ENCODE measurements at regions of chr19 and their contacts with region 1.

Region 1: DNA sequence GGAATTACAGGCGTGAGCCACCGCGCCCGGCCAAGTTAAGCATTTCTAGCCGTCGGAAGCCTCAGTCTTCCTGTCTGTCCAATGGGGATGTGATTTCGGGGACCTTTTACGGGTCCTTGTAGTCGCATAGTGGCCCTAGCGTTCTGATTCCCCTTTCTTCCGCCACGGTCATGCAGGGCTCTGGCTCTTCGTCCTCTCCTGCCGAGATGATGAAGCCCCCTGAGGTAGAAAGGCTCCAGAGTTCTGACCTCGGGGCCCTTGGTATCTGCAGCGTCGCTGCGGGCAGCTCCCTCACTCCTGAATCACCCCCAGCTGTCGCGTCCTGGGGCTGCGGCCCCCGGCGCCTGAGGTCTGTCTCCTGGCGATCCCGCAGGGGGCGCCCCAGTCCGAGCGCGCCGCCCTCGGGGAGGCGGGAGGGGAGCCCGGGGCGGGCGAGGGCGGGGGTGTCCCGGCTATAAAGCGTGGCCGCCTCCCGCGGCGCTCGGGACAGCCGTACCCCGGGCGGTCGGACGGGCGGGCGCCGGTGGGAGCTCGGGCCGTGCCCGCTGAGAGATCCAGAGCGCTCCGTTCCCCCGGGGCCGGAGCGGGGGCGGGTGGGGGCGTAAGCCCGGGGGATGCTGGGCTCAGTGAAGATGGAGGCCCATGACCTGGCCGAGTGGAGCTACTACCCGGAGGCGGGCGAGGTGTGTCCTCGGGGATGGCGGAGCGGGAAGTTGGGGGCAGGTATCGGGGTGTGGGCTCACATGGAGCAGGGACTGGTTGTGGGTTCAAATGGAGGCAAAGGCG is at the start of gene FOXA3:
- DNase-seq: peak; percentile 77 to 96 (median 89)
- ATAC-seq: peak; percentile 80 to 87 (median 82)
- H3K4me3 ChIP-seq: peak within 1 kb of the TSS; percentile 56 to 94 (median 92)
- H3K27ac ChIP-seq: peak within 1 kb of the TSS; percentile 44 to 86 (median 67)
- H3K4me1 ChIP-seq: peaks cover 0 to 15% (median 7%) of the 10 kb centered on the region in 3 donors
- H3K27me3 ChIP-seq: no peaks in the 10 kb centered on the region
- CTCF ChIP-seq: peak; percentile 78 to 84 (median 79)
- total RNA-seq, gene FOXA3: 20.6 to 45.0 (median 28.3) TPM

Region 2: DNA sequence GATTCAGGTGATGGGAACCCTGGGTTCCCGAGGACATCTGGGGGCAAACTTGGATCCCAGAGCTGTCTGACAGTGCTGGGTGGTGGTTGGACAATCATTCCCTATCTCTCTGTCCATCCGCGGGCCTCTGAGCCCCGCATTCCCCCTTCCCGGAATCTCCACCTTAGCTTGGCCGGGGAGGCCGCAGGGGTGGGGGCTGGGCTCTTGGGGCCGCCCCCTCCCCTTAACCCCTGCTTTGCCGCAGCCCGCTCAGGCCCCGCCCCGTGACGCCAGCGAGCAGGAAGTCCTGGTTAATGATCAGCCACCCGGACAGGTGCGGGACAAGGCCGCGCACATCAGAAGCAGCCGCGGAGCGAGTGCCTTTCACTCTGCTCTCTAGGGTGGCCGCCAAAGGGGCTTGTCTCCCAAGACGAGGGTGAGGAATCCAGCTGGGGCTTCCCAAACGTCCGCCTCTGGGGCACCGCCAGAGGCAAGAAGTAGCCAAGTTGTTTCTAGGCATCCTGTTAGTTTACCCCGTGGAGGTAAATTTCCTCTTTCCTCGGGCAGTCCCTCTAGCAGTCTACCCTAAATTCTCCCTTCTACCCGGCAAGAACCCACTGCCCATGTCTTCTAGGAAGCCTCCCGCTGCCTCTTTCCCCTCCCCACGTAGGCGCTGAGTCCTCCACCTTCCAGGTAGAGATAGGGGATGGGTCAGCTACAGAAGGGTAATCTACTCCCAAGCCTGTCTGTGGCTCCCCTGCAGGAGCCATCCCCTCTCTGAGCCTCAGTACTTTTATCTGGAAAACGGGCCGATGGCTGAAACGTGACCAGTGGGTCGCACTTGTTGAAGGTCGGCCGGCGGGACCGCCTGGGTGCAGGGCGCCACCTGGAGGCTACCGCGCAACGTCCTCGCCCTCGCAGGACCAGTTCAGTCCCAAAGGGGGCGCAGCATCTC is 18.9 kb after region 1 on chr19:
- intact Hi-C with region 1: loop called in 1 of 3 experiments (anchors 2 kb)
- DNase-seq: peak; percentile 96 to 99 (median 98)
- ATAC-seq: peak; percentile 59 to 73 (median 62)
- H3K4me3 ChIP-seq: peak overlapping the region; percentile 12 to 83 (median 61)
- H3K27ac ChIP-seq: peak overlapping the region; percentile 61 to 96 (median 84)
- H3K4me1 ChIP-seq: peaks cover 38 to 52% (median 49%) of the 10 kb centered on the region in 3 donors
- H3K27me3 ChIP-seq: no peaks in the 10 kb centered on the region
- CTCF ChIP-seq: peak; percentile 89 to 94 (median 92)